Breast epithelium (tissue), 4 donors: ENCODE measurements at regions of chr1 and their contacts with region 1.

Region 1: GRCh38 chr1:12528021-12528852 is 89.8 kb downstream of the DHRS3 start:
- DNase-seq: peak; percentile 65 to 94
- H3K4me3 ChIP-seq: no peak overlapping the region
- H3K27ac ChIP-seq: peak overlapping the region in 1 of 2 donors; percentile 77
- H3K4me1 ChIP-seq: no peaks in the 10 kb centered on the region
- H3K27me3 ChIP-seq: no peaks in the 10 kb centered on the region
- CTCF ChIP-seq: no peak
- POLR2A ChIP-seq: no peak

Region 2: GRCh38 chr1:12434174-12434573 is 94.1 kb before region 1 on chr1:
- intact Hi-C with region 1: loop called (anchors 5 kb)
- DNase-seq: no peak
- H3K4me3 ChIP-seq: no peak overlapping the region
- H3K27ac ChIP-seq: peak overlapping the region; percentile 75 to 82
- H3K4me1 ChIP-seq: peaks cover 0 to 12% of the 10 kb centered on the region in 2 donors
- H3K27me3 ChIP-seq: no peaks in the 10 kb centered on the region
- CTCF ChIP-seq: no peak
- POLR2A ChIP-seq: no peak